ENCODE measurements at regions of chr10 and their contacts with region 1.

Region 1: DNA sequence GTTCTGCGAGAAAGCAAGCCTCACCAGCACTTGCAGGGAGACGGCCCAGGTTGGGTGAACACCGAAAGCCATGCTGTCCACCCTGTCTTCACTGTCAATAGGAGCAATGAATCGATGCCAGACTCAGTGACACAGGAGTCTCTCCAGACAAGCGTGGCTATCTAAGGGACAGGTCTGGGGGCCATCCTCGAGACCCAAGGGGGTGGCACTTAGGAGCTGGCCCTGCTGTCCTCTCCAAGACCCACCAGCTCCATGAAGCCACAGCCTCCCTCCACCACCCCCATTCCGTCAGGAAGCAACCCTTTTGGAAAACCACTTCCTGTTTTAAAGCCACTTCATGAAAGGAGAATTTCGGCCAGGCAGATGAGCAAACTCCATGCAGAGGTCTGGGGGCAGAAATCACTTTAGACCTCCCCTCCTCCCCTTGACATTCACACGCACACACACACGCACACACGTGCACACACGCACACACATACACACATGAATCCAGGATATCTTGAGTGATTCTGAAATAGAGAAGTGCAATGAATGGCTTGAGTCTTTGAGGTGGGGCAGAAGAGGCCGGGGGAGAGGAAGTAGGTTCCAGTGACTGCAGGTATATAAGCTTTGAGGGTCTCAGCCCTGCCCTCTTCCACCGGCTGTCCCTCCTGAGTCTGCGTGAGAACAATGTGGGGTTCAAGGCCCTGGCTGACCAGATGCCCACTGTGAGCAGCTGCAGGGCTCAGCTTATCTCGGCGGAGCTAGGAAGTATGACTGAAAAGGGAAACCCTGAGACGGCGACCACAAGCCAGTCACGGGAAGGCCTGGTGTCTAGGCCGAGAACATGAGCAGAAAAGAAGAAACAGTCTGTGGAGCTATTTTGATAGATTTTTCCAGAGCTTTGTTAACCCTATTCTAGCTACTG is 25.0 kb downstream of the RGS10 start:
- DNase-seq: peak; percentile 75
- H3K4me3 Mint-ChIP-seq: peak overlapping the region; percentile 60
- H3K27ac Mint-ChIP-seq: peak overlapping the region; percentile 94
- H3K4me1 Mint-ChIP-seq: peaks cover 42% of the 10 kb centered on the region
- H3K27me3 Mint-ChIP-seq: no peaks in the 10 kb centered on the region

Region 2: DNA sequence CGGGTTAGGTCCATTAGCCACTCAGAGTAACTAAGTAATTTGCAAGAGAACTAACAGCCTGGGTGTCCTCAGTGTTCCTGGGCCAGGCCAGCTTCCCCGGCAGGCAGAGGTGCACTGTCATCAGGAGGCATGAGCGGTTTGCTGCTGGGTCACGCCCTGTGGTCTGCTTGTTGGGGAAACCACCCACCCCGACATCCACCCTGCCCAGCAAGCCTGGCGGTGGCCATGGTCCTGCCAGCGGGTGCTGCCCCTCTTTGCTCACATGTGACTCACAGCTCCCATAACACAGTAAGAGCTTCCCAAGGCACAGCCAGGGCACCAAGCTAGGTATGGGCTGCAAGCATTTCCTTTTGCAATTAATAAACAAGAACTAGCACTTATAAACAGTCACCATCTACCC is 50.8 kb before region 1 on chr10:
- CTCF ChIA-PET with region 1: no interaction called
- POLR2A ChIA-PET with region 1: no interaction called
- DNase-seq: peak; percentile 72
- H3K4me3 Mint-ChIP-seq: no peak overlapping the region
- H3K27ac Mint-ChIP-seq: peak overlapping the region; percentile 58
- H3K4me1 Mint-ChIP-seq: peaks cover 35% of the 10 kb centered on the region
- H3K27me3 Mint-ChIP-seq: peaks cover 15% of the 10 kb centered on the region

Region 3: GRCh38 chr10:119502209-119502608 is 15.3 kb before region 1 on chr10:
- CTCF ChIA-PET with region 1: interaction called, 5 read pairs
- POLR2A ChIA-PET with region 1: interaction called, 38 read pairs
- DNase-seq: peak; percentile 84
- H3K4me3 Mint-ChIP-seq: peak overlapping the region; percentile 35
- H3K27ac Mint-ChIP-seq: peak overlapping the region; percentile 91
- H3K4me1 Mint-ChIP-seq: peaks cover 57% of the 10 kb centered on the region
- H3K27me3 Mint-ChIP-seq: no peaks in the 10 kb centered on the region

Region 4: GRCh38 chr10:119531067-119531466 is 13.6 kb after region 1 on chr10:
- CTCF ChIA-PET with region 1: interaction called, 4 read pairs
- POLR2A ChIA-PET with region 1: interaction called, 15 read pairs
- DNase-seq: no peak
- H3K4me3 Mint-ChIP-seq: no peak overlapping the region
- H3K27ac Mint-ChIP-seq: no peak overlapping the region
- H3K4me1 Mint-ChIP-seq: peaks cover 31% of the 10 kb centered on the region
- H3K27me3 Mint-ChIP-seq: no peaks in the 10 kb centered on the region

Measured in activated CD4-positive, alpha-beta memory T cell treated with anti-CD3 and anti-CD28 coated beads, Interleukin-2, amount 10 ng/mL, durations not matched to agents 7 days and 5 days (primary cell).